Cardiac septum (tissue), 1 donor: ENCODE measurements at regions of chr2 and their contacts with region 1.

Region 1: GRCh38 chr2:181970160-181970794 is 15.4 kb upstream of the PPP1R1C start:
- DNase-seq: no peak

Region 2: GRCh38 chr2:182077451-182078142 is 107.3 kb after region 1 on chr2:
- intact Hi-C with region 1: loop called (anchors 5 kb)
- DNase-seq: no peak